Activated CD4-positive, alpha-beta T cell treated with anti-CD3 and anti-CD28 coated beads for 36 hours (primary cell): ENCODE measurements at regions of chr13 and their contacts with region 1.

Region 1: GRCh38 chr13:27730191-27730590 is 62.1 kb upstream of the GSX1 start:
- DNase-seq: no peak
- ATAC-seq: no peak
- H3K4me3 Mint-ChIP-seq: no peak overlapping the region
- H3K27ac Mint-ChIP-seq: no peak overlapping the region
- H3K4me1 Mint-ChIP-seq: peaks cover 21% of the 10 kb centered on the region
- H3K27me3 Mint-ChIP-seq: peaks cover 2% of the 10 kb centered on the region

Region 2: GRCh38 chr13:27226991-27227390 is 503.2 kb before region 1 on chr13:
- CTCF ChIA-PET with region 1: no interaction called
- POLR2A ChIA-PET with region 1: no interaction called
- intact Hi-C with region 1: loop called in 1 of 2 experiments (anchors 5 kb)
- DNase-seq: no peak
- ATAC-seq: no peak
- H3K4me3 Mint-ChIP-seq: no peak overlapping the region
- H3K27ac Mint-ChIP-seq: no peak overlapping the region
- H3K4me1 Mint-ChIP-seq: peaks cover 7% of the 10 kb centered on the region
- H3K27me3 Mint-ChIP-seq: peaks cover 9% of the 10 kb centered on the region